ENCODE measurements at regions of chr12 and their contacts with region 1.

Region 1: DNA sequence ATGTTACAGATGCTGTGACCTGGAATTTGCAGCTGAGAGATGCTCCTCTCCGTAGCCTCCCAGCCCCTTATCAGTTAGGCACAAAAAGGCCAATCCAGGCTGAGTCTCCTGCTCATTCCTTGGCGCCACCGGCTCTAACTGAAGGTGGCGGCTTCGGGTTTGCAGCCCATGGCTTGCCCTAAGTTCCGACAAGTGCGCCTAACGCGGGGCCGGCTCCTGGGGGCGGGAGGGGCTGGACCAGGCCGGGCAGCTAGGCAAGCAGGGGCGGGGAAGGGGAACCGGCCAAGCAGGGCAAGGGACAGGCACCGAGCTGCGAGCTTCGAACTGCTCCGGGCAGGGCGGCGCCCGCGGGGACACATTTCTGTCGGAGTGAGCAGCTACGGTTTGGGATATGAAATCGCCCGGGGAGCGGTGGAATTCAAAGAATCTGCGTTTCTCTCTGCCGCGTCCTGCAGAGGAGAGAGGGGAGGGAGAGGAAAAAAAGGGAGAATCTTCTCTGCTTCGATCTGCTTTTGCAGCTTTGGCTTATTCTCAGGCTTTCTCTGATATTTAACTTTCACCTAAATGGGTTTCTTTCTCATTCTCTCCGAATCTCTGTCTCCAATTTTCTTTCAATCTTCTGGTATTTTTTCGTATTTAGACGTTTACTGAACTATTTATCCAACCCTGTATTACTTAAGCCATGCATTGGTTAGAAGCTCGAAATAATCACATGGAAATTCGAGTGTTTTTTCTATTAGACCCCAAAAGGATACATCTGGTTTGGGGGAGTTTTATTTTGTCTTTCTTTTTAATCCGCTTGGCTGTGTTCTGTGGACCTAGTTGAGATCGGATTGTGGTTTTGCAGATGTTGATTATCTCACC is 1.6 kb upstream of the HOXC12 start:
- DNase-seq: peak; percentile 50
- ATAC-seq: no peak
- H3K4me3 ChIP-seq: no peak overlapping the region
- H3K4me3 Mint-ChIP-seq: no peak overlapping the region
- H3K27ac ChIP-seq: no peak overlapping the region
- H3K27ac Mint-ChIP-seq: no peak overlapping the region
- H3K4me1 ChIP-seq: peaks cover 14 to 55% of the 10 kb centered on the region in 2 donors
- H3K4me1 Mint-ChIP-seq: peaks cover 17% of the 10 kb centered on the region
- H3K27me3 ChIP-seq: peaks cover 0 to 98% (median 82%) of the 10 kb centered on the region in 4 experiments
- H3K27me3 Mint-ChIP-seq: peaks cover 70% of the 10 kb centered on the region
- CTCF ChIP-seq: no peak

Region 2: DNA sequence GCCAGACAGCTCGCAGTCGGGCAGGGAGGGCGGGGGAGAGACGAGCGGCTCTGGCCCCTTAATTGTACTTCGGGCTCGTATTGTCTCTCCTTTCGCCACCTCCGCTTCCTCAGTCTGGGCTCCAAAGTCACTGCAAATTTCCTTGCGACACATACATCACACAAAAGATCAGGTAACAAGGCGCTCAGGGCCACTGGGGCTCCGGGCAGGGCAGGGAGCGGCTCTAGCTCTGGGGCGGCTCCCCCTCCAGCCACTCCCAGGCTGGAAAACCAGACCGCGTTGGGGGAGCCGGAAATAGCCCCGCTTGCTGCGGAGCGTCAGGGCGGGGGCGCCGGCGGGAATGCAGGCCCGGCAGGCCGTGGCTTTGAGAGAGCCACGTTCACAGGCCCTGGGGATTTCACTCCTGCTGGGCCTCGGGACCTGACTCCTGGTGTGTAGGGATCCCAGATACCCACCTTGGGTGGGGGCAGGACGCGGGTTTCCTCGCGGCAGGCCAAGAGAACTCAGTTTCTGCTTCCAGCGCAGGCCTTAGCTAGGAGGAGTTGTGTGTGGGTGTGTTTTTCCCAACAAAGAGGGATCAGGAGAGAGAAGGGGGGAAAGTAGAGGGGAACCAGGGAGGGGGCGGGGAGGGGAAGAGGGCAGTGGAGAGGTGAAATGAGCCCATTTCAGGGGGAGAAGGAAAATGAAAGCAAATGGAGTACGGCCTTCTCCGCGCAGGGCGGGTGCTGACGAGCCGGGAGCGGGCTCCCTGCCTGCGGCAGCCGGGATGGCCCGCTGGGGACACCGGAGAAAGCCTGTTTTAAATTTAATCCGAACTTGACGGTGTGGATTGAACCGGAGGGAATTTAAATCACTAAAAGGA is 42.5 kb after region 1 on chr12:
- CTCF ChIA-PET with region 1: no interaction called
- POLR2A ChIA-PET with region 1: no interaction called
- intact Hi-C with region 1: loop called (anchors 5 kb)
- DNase-seq: peak; percentile 62
- ATAC-seq: peak; percentile 43
- H3K4me3 ChIP-seq: peak overlapping the region in 4 of 5 experiments; percentile 44 to 60 (median 58)
- H3K4me3 Mint-ChIP-seq: peak overlapping the region; percentile 89
- H3K27ac ChIP-seq: no peak overlapping the region
- H3K27ac Mint-ChIP-seq: peak overlapping the region; percentile 47
- H3K4me1 ChIP-seq: peaks cover 37 to 70% of the 10 kb centered on the region in 2 donors
- H3K4me1 Mint-ChIP-seq: peaks cover 35% of the 10 kb centered on the region
- H3K27me3 ChIP-seq: peaks cover 0 to 98% (median 84%) of the 10 kb centered on the region in 4 experiments
- H3K27me3 Mint-ChIP-seq: peaks cover 87% of the 10 kb centered on the region
- CTCF ChIP-seq: no peak

Measured in B cell (primary cell).